ENCODE measurements at regions of chr7 and their contacts with region 1.

Region 1: DNA sequence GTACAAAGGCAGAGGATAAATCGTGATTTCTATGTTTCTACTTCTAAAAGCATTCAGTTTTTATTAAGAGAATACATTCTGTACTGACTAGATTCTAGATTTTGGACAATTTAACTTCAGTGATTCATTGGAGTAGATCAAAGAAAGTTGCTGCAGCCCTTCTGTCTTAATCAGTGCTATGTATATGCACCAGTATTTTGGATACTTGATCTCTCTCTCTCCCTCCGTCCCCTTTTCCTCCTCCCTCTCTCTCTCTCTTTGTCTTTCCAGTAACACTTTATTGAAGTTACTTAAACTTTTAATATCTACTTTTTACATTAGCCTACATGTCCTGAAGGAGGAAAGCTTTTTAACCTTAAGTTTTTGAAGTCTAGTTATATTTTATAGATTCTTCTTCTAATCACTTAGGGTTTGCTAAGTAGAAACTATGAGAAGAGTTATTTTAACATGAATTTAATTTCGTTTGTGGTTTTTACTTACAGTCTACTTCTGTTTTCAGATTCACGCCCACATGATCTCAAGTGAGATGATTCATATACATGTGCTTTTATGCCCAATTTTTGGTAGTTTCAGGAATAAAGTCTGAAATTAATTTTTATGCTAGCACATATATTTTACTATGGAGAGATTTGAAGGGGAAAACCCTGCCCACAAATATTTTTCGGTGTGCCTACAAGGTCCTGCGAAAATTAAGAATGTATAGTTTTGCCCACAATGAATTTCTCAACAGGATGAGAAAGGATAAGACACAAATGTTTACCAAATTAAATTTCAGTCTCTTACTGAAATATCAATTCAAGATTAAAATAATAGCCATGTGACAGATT is 9.1 kb downstream of the MDFIC start:
- DNase-seq: peak in 1 of 9 donors; percentile 13
- ATAC-seq: peak; percentile 62
- H3K4me3 ChIP-seq: peak overlapping the region; percentile 32
- H3K4me3 Mint-ChIP-seq: peak overlapping the region in 4 of 10 donors; percentile 70 to 83 (median 80)
- H3K27ac ChIP-seq: peak overlapping the region; percentile 49
- H3K27ac Mint-ChIP-seq: peak overlapping the region in 5 of 9 donors; percentile 52 to 89 (median 86)
- H3K4me1 ChIP-seq: peaks cover 73 to 76% of the 10 kb centered on the region in 2 donors
- H3K4me1 Mint-ChIP-seq: peaks cover 13 to 54% (median 37%) of the 10 kb centered on the region in 7 donors
- H3K27me3 ChIP-seq: no peaks in the 10 kb centered on the region
- H3K27me3 Mint-ChIP-seq: no peaks in the 10 kb centered on the region

Region 2: DNA sequence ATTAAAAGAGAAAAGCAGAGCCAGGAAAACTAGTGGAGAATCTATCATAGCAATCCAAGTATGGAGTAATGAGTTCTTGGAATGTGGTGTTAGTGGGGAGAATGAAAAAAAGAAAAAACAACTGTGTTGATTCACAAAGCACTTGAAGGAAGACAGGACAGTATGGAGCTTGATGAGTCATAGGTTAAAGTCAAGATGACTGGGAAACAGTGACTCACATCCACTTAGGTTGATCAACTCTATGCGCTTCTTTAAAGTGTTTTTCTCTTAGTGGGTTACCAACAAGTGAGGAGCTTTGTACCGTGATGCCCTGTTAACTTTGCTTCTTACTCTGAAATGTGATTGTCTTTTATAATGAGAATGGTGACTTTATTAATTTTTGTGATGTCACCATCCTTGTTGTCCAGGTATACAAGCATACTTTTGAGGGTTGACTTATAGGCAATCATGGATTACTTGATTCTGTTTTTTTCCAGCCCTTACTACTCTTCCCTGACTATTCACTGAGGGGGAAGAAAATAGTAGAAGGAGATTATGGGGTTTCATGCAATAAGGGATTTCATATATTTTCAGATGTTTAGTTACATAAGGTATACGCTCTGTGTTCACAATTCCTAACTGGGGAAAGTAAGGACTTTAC is 41.3 kb before region 1 on chr7:
- CTCF ChIA-PET with region 1: no interaction called
- POLR2A ChIA-PET with region 1: no interaction called
- intact Hi-C with region 1: loop called in 1 of 2 experiments (anchors 1 kb)
- DNase-seq: no peak
- ATAC-seq: peak; percentile 49
- H3K4me3 ChIP-seq: no peak overlapping the region
- H3K4me3 Mint-ChIP-seq: no peak overlapping the region
- H3K27ac ChIP-seq: no peak overlapping the region
- H3K27ac Mint-ChIP-seq: peak overlapping the region in 3 of 9 donors; percentile 33 to 67 (median 53)
- H3K4me1 ChIP-seq: no peaks in the 10 kb centered on the region
- H3K4me1 Mint-ChIP-seq: peaks cover 0 to 22% (median 0%) of the 10 kb centered on the region in 7 donors
- H3K27me3 ChIP-seq: peaks cover 0 to 2% of the 10 kb centered on the region in 2 donors
- H3K27me3 Mint-ChIP-seq: no peaks in the 10 kb centered on the region

Region 3: GRCh38 chr7:114916261-114916892 is 14.7 kb before region 1 on chr7:
- CTCF ChIA-PET with region 1: no interaction called
- POLR2A ChIA-PET with region 1: interaction called, 12 read pairs
- intact Hi-C with region 1: loop called in 1 of 2 experiments (anchors 2 kb)
- DNase-seq: peak in 1 of 9 donors; percentile 50
- ATAC-seq: peak; percentile 73
- H3K4me3 ChIP-seq: peak overlapping the region; percentile 14
- H3K4me3 Mint-ChIP-seq: peak overlapping the region; percentile 25 to 78 (median 65)
- H3K27ac ChIP-seq: peak overlapping the region; percentile 8
- H3K27ac Mint-ChIP-seq: peak overlapping the region; percentile 59 to 96 (median 82)
- H3K4me1 ChIP-seq: peaks cover 7 to 22% of the 10 kb centered on the region in 2 donors
- H3K4me1 Mint-ChIP-seq: peaks cover 9 to 43% (median 26%) of the 10 kb centered on the region in 7 donors
- H3K27me3 ChIP-seq: no peaks in the 10 kb centered on the region
- H3K27me3 Mint-ChIP-seq: no peaks in the 10 kb centered on the region

Region 4: GRCh38 chr7:114944745-114945625 is 13.9 kb after region 1 on chr7:
- CTCF ChIA-PET with region 1: interaction called, 3 read pairs
- POLR2A ChIA-PET with region 1: no interaction called
- intact Hi-C with region 1: loop called in 1 of 2 experiments (anchors 2 kb)
- DNase-seq: no peak
- ATAC-seq: no peak
- H3K4me3 ChIP-seq: no peak overlapping the region
- H3K4me3 Mint-ChIP-seq: no peak overlapping the region
- H3K27ac ChIP-seq: no peak overlapping the region
- H3K27ac Mint-ChIP-seq: no peak overlapping the region
- H3K4me1 ChIP-seq: peaks cover 31 to 46% of the 10 kb centered on the region in 2 donors
- H3K4me1 Mint-ChIP-seq: peaks cover 61 to 94% (median 72%) of the 10 kb centered on the region in 7 donors
- H3K27me3 ChIP-seq: no peaks in the 10 kb centered on the region
- H3K27me3 Mint-ChIP-seq: no peaks in the 10 kb centered on the region

Region 5: GRCh38 chr7:114970308-114970707 is 39.3 kb after region 1 on chr7:
- CTCF ChIA-PET with region 1: no interaction called
- POLR2A ChIA-PET with region 1: no interaction called
- intact Hi-C with region 1: loop called in 1 of 2 experiments (anchors 2 kb)
- DNase-seq: no peak
- ATAC-seq: peak; percentile 31
- H3K4me3 ChIP-seq: no peak overlapping the region
- H3K4me3 Mint-ChIP-seq: peak overlapping the region in 2 of 10 donors; percentile 13 to 15
- H3K27ac ChIP-seq: no peak overlapping the region
- H3K27ac Mint-ChIP-seq: peak overlapping the region in 4 of 9 donors; percentile 18 to 51 (median 42)
- H3K4me1 ChIP-seq: peaks cover 22 to 29% of the 10 kb centered on the region in 2 donors
- H3K4me1 Mint-ChIP-seq: peaks cover 46 to 94% (median 89%) of the 10 kb centered on the region in 7 donors
- H3K27me3 ChIP-seq: no peaks in the 10 kb centered on the region
- H3K27me3 Mint-ChIP-seq: no peaks in the 10 kb centered on the region

Region 6: GRCh38 chr7:115008465-115009114 is 77.5 kb after region 1 on chr7:
- CTCF ChIA-PET with region 1: no interaction called
- POLR2A ChIA-PET with region 1: no interaction called
- intact Hi-C with region 1: loop called in 1 of 2 experiments (anchors 2 kb)
- DNase-seq: peak in 1 of 9 donors; percentile 23
- ATAC-seq: peak; percentile 58
- H3K4me3 ChIP-seq: peak overlapping the region; percentile 25
- H3K4me3 Mint-ChIP-seq: peak overlapping the region; percentile 53 to 85 (median 76)
- H3K27ac ChIP-seq: peak overlapping the region; percentile 54
- H3K27ac Mint-ChIP-seq: peak overlapping the region; percentile 56 to 94 (median 88)
- H3K4me1 ChIP-seq: peaks cover 53 to 75% of the 10 kb centered on the region in 2 donors
- H3K4me1 Mint-ChIP-seq: peaks cover 48 to 94% (median 86%) of the 10 kb centered on the region in 7 donors
- H3K27me3 ChIP-seq: no peaks in the 10 kb centered on the region
- H3K27me3 Mint-ChIP-seq: no peaks in the 10 kb centered on the region

Region 7: DNA sequence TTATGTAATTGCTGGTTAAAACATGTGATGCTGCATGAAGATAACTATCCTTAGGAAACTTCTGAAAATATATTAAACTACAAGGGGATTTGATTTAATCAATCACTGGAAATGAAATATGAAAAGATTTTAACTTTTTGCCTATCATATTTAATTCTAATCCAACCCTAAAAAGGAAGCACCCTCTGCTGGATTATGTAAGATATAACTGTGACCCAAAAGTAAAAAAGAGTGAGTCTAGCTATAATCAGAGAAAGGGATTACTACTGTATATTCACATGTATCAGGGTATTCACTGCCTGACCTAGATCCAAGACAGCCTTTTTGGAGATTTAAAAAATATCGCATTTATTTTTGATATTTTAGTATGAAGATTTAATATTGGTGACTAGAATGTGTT is 286.3 kb after region 1 on chr7:
- CTCF ChIA-PET with region 1: interaction called, 3 read pairs
- POLR2A ChIA-PET with region 1: no interaction called
- intact Hi-C with region 1: loop called in 1 of 2 experiments (anchors 5 kb)
- DNase-seq: peak in 1 of 9 donors; percentile 21
- ATAC-seq: peak; percentile 41
- H3K4me3 ChIP-seq: no peak overlapping the region
- H3K4me3 Mint-ChIP-seq: no peak overlapping the region
- H3K27ac ChIP-seq: no peak overlapping the region
- H3K27ac Mint-ChIP-seq: no peak overlapping the region
- H3K4me1 ChIP-seq: peaks cover 0 to 11% of the 10 kb centered on the region in 2 donors
- H3K4me1 Mint-ChIP-seq: peaks cover 0 to 11% (median 5%) of the 10 kb centered on the region in 7 donors
- H3K27me3 ChIP-seq: no peaks in the 10 kb centered on the region
- H3K27me3 Mint-ChIP-seq: peaks cover 0 to 10% (median 0%) of the 10 kb centered on the region in 5 donors

Region 8: GRCh38 chr7:116899308-116899707 is 1968.3 kb after region 1 on chr7:
- CTCF ChIA-PET with region 1: no interaction called
- POLR2A ChIA-PET with region 1: no interaction called
- intact Hi-C with region 1: no loop called
- DNase-seq: no peak
- ATAC-seq: no peak
- H3K4me3 ChIP-seq: no peak overlapping the region
- H3K4me3 Mint-ChIP-seq: no peak overlapping the region
- H3K27ac ChIP-seq: no peak overlapping the region
- H3K27ac Mint-ChIP-seq: peak overlapping the region in 1 of 9 donors; percentile 9
- H3K4me1 ChIP-seq: no peaks in the 10 kb centered on the region
- H3K4me1 Mint-ChIP-seq: peaks cover 0 to 23% (median 13%) of the 10 kb centered on the region in 7 donors
- H3K27me3 ChIP-seq: no peaks in the 10 kb centered on the region
- H3K27me3 Mint-ChIP-seq: no peaks in the 10 kb centered on the region